CD8-positive, alpha-beta memory T cell (primary cell): ENCODE measurements at regions of chr1 and their contacts with region 1.

Region 1: DNA sequence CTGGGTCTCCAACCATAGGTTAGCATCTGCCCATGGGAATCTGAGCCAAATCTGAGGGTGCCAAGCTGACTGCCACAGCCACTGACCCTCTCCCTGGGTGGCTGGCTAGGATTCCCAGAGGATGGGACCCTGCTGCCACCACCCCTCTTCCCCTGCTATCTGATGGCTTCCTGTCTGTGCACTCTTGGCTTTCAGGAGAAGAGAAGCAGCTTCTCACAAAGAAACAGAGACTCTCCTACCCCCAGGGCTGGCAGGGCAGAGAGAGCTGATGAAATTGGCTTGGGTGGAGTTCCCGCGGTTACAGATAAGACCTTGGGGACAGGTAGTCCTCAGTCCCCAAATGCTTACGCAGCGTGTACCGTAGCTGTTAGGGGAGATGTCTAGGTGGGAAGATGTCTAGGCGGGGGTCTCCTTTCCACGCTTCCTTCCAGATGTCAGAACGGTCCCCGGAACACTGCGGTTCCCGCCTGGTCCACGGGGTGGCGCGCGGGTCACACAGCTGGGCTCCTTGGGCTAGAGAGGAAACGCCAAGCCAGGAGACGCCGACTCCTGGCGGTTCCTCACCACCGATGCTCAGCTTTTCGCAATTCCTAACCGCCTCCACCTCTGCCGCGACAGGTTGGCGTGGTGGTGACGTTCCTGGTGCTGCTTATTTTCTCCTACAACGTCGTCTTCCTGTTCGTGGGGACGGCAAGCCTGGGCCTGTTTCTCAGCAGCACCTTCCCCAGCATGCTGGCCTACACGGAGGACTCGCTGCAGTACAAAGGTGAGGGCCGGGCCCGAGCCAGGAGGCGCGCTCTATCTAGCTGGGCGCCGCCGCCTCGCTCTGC is 40.1 kb downstream of the ELK4 start:
- DNase-seq: peak; percentile 82 to 91 (median 85)
- H3K4me3 ChIP-seq: peak overlapping the region; percentile 68
- H3K4me3 Mint-ChIP-seq: peak overlapping the region; percentile 86 to 94 (median 89)
- H3K27ac ChIP-seq: peak overlapping the region; percentile 26
- H3K27ac Mint-ChIP-seq: peak overlapping the region; percentile 33 to 93 (median 90)
- H3K4me1 ChIP-seq: peaks cover 37% of the 10 kb centered on the region
- H3K4me1 Mint-ChIP-seq: peaks cover 17 to 30% (median 29%) of the 10 kb centered on the region in 3 donors
- H3K27me3 ChIP-seq: no peaks in the 10 kb centered on the region
- H3K27me3 Mint-ChIP-seq: no peaks in the 10 kb centered on the region

Region 2: DNA sequence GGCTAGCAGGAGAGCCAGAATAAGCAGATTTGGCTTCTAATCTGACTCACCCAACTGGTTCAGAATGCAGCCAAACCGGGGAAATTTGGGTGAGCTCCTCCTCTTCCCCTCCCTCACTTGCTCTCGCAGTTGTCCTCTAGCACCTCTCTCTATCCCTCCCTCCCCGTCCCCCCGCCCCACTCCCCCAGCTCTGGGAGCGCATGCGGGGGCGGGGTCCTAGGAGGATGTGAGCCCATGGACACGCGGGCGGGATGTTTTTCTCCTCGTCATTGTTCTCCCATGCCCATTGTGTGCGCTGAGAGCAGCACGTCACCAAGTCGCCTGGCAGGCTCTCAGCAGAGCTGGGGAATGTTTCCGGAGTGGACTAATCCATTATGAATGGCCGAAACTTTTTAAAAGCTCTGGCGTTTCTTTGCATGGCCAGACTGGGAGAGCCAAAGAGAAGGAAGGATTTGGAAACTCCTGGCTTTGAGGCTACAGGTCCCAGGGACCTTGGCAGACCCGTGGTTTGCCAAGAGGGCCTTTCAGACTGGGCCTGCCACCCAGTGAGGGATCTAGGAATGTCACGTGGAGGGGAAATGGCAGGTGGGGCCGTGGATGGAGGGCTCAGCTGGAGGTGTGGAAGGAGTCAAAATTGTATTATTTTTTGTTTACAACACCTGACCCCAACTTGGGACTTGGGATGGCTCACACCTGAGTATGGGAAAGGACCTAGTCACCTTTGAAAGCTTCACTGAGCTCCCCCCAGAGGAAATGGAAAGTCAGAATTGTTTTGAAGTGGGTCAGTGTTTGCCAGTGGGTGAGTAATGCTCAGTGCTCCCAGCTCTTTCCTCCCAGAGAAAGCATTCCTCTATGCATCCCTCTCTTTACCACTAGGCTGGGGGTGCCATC is 48.1 kb before region 1 on chr1:
- CTCF ChIA-PET with region 1: no interaction called
- POLR2A ChIA-PET with region 1: no interaction called
- DNase-seq: no peak
- H3K4me3 ChIP-seq: no peak overlapping the region
- H3K4me3 Mint-ChIP-seq: no peak overlapping the region
- H3K27ac ChIP-seq: no peak overlapping the region
- H3K27ac Mint-ChIP-seq: peak overlapping the region in 1 of 8 donors; percentile 62
- H3K4me1 ChIP-seq: no peaks in the 10 kb centered on the region
- H3K4me1 Mint-ChIP-seq: no peaks in the 10 kb centered on the region
- H3K27me3 ChIP-seq: peaks cover 7% of the 10 kb centered on the region
- H3K27me3 Mint-ChIP-seq: peaks cover 59 to 68% of the 10 kb centered on the region in 2 donors

Region 3: GRCh38 chr1:205623646-205624045 is 31.9 kb after region 1 on chr1:
- CTCF ChIA-PET with region 1: interaction called, 14 read pairs
- POLR2A ChIA-PET with region 1: no interaction called
- DNase-seq: no peak
- H3K4me3 ChIP-seq: no peak overlapping the region
- H3K4me3 Mint-ChIP-seq: no peak overlapping the region
- H3K27ac ChIP-seq: no peak overlapping the region
- H3K27ac Mint-ChIP-seq: peak overlapping the region in 5 of 8 donors; percentile 14 to 90 (median 40)
- H3K4me1 ChIP-seq: peaks cover 36% of the 10 kb centered on the region
- H3K4me1 Mint-ChIP-seq: peaks cover 55 to 70% (median 62%) of the 10 kb centered on the region in 3 donors
- H3K27me3 ChIP-seq: no peaks in the 10 kb centered on the region
- H3K27me3 Mint-ChIP-seq: no peaks in the 10 kb centered on the region

Region 4: DNA sequence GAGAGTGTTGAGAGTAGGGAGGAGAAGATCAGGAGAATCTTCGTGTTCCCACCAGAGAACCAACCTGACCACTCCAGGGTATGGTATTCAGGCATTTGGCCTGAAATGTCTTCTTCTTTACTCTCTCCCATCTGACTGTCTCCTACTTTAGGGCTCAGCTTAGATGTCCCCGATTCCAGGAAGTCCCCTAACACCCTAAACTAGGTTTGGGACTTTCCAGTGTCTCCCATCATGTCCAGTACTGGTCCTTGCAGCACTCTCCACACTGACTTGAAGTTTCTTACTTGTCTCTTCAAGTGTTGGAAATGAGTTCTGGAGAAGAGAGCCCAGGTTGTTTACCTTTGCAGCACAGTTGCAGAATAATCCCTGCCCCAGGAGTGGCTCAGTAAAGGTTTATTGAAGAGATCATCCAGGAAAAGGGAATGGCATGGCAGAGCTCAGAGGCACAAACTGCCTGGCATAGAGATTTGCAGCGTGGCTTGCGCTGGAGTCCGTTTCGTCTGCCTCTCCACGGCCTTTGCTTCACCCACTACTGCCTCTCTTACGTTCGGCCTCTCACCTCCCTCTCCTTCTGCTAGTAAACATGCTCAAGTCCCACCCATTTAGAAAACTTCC is 46.2 kb after region 1 on chr1:
- CTCF ChIA-PET with region 1: interaction called, 96 read pairs
- POLR2A ChIA-PET with region 1: interaction called, 67 read pairs
- DNase-seq: no peak
- H3K4me3 ChIP-seq: no peak overlapping the region
- H3K4me3 Mint-ChIP-seq: no peak overlapping the region
- H3K27ac ChIP-seq: no peak overlapping the region
- H3K27ac Mint-ChIP-seq: peak overlapping the region in 1 of 8 donors; percentile 16
- H3K4me1 ChIP-seq: no peaks in the 10 kb centered on the region
- H3K4me1 Mint-ChIP-seq: peaks cover 0 to 2% (median 0%) of the 10 kb centered on the region in 3 donors
- H3K27me3 ChIP-seq: no peaks in the 10 kb centered on the region
- H3K27me3 Mint-ChIP-seq: peaks cover 5 to 24% of the 10 kb centered on the region in 2 donors

Region 5: DNA sequence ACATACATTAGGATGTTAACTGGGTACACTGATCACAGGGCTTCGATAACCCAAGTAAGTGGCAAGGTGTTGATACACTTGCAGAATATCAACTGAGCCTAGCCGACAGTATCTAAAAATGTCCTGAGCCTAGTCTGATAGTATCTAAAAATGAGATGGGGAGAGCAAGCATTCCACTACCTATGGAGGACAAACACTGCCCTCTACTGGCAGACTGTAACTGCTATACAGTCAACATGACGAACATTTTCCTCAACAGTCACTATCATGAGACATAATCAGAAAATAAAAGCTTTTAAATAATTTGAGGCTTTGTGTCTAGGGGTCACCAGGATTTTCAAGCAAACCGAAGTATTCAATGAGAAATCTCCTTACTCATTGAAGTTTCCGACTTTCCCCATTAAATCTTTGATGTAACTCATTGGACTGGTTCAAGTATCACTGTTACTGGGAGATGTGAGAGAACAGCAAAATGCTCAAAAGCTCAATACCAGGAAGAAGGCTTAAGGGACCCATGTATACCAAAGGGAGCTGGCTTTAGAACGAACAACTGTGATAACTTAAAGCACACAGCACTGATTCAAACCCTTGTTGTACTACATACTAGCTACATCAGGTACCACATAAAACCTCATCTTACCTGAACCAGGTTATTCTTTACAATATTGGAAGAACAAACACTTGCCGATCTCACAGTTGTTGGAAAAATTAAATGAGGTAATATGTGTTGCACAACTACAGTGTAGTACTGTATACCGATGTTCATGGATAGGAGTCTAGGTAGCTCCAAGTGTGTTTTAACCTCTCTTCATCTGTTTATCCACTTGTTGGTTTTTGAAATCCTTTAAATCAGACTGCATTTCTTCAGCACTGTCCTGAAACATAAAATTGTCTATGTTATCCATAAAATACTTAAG is 119.6 kb after region 1 on chr1:
- CTCF ChIA-PET with region 1: interaction called, 23 read pairs
- POLR2A ChIA-PET with region 1: no interaction called
- DNase-seq: peak; percentile 40 to 68 (median 47)
- H3K4me3 ChIP-seq: no peak overlapping the region
- H3K4me3 Mint-ChIP-seq: no peak overlapping the region
- H3K27ac ChIP-seq: no peak overlapping the region
- H3K27ac Mint-ChIP-seq: peak overlapping the region; percentile 27 to 76 (median 44)
- H3K4me1 ChIP-seq: peaks cover 4% of the 10 kb centered on the region
- H3K4me1 Mint-ChIP-seq: peaks cover 9 to 20% (median 11%) of the 10 kb centered on the region in 3 donors
- H3K27me3 ChIP-seq: no peaks in the 10 kb centered on the region
- H3K27me3 Mint-ChIP-seq: peaks cover 0 to 2% of the 10 kb centered on the region in 2 donors